ENCODE measurements at regions of chr2 and their contacts with region 1.

Region 1: GRCh38 chr2:228841894-228842293 is 429.2 kb downstream of the PID1 start:
- DNase-seq: no peak
- ATAC-seq: peak in 2 of 8 donors; percentile 19 to 29
- H3K4me3 ChIP-seq: no peak overlapping the region
- H3K27ac ChIP-seq: peak overlapping the region in 6 of 10 donors; percentile 3 to 47 (median 20)
- H3K4me1 ChIP-seq: peaks cover 0 to 2% (median 0%) of the 10 kb centered on the region in 9 donors
- H3K27me3 ChIP-seq: no peaks in the 10 kb centered on the region
- CTCF ChIP-seq: no peak

Region 2: GRCh38 chr2:228771774-228772173 is 70.1 kb before region 1 on chr2:
- intact Hi-C with region 1: loop called in 1 of 10 experiments (anchors 2 kb)
- DNase-seq: no peak
- ATAC-seq: peak in 2 of 8 donors; percentile 42 to 71
- H3K4me3 ChIP-seq: no peak overlapping the region
- H3K27ac ChIP-seq: peak overlapping the region in 2 of 10 donors; percentile 17 to 35
- H3K4me1 ChIP-seq: peaks cover 0 to 11% (median 0%) of the 10 kb centered on the region in 9 donors
- H3K27me3 ChIP-seq: no peaks in the 10 kb centered on the region
- CTCF ChIP-seq: no peak